HEK293 (cell line): ENCODE measurements at regions of chr2 and their contacts with region 1.

Region 1: DNA sequence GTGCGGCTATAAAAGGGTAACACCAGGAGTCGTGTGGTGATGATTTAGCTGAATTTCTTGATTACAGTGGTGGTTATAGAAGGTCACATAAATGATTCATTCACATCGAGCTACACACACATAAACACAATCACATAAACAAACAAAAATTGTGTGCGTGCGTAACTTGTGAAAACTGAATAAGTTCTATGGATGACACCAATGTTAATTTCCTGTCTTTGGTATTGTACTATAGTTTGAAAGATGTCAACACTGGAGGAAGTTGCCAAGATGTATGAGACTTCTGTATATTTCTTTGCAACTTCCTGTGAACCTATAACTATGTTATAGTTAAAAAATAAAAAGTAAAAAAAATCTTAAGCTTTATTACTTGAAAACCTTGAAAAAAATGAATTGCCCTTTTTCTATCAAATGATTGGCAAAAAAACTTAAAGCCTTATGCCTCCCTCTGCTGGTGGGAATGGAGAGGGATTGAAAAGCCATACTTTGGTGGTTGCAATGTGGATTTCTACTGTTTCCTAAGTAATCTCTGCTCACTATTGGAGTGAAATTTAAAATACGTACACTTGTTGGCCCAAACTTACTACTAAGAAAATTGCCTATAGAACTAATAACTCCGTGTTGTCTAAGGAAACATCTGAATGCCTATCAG is 227.7 kb downstream of the RPIA start:
- H3K4me3 ChIP-seq: no peak overlapping the region
- H3K27ac ChIP-seq: no peak overlapping the region
- H3K4me1 ChIP-seq: no peaks in the 10 kb centered on the region
- CTCF ChIP-seq: no peak

Region 2: DNA sequence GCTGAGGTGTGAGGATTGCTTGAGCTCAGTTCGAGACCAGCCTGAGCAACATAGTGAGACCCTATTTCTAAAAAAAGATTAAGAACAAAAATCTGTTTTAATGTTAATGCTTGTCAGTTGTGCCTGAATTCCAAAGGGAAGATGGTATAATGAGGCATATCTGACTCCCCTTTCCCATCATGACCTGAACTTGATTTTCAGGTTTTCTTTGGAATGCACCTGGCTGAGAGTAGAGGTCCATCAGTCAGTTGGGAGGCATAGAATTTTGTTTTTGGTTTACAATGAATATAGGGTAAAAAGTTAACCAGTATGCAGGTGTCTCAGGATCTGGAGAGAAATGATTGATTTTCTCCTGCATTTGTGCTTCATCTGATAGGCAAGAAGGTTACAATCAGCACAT is 207.3 kb before region 1 on chr2:
- CTCF ChIA-PET with region 1: no interaction called
- POLR2A ChIA-PET with region 1: no interaction called
- H3K4me3 ChIP-seq: no peak overlapping the region
- H3K27ac ChIP-seq: no peak overlapping the region
- H3K4me1 ChIP-seq: no peaks in the 10 kb centered on the region
- CTCF ChIP-seq: no peak

Region 3: DNA sequence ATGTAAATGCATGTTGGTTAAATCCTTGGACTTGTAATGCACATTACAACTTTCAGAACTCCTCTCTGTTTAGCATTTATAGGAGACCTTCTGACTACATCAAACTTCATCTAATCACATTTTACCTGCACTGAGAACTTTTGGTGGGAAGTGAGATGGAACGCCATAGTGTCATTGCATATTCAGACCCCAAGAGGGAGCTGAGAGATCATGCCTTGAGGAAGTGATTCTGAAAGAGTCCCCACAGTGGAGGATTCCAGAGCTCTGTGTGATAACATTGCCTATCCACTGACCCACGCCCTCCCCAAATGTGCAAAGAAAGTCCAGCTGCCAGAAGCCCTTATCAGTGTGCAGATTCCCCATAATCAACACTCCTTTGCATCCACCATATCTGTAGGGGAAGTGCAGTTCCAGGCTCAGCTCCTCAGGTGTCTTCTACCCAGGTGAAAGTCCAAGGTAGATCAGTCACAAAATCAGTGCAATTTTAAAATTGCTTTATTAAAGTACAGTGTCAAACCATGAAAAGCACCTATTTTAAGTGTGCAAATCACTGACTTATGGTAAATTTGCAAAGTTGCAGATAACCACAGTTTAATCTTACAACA is 15.4 kb before region 1 on chr2:
- CTCF ChIA-PET with region 1: interaction called, 12 read pairs
- POLR2A ChIA-PET with region 1: no interaction called
- H3K4me3 ChIP-seq: no peak overlapping the region
- H3K27ac ChIP-seq: no peak overlapping the region
- H3K4me1 ChIP-seq: no peaks in the 10 kb centered on the region
- CTCF ChIP-seq: peak; percentile 63